ENCODE measurements at regions of chr6 and their contacts with region 1.

Region 1: GRCh38 chr6:27838058-27838944 is 73.9 kb downstream of the OR2B2 start:
- DNase-seq: peak; percentile 65 to 96 (median 93)
- ATAC-seq: peak; percentile 86
- H3K4me3 ChIP-seq: peak overlapping the region; percentile 87
- H3K4me3 Mint-ChIP-seq: no peak overlapping the region
- H3K27ac ChIP-seq: peak overlapping the region; percentile 93
- H3K27ac Mint-ChIP-seq: no peak overlapping the region
- H3K4me1 ChIP-seq: peaks cover 22 to 34% of the 10 kb centered on the region in 2 donors
- H3K4me1 Mint-ChIP-seq: peaks cover 7 to 39% (median 29%) of the 10 kb centered on the region in 7 donors
- H3K27me3 ChIP-seq: no peaks in the 10 kb centered on the region
- H3K27me3 Mint-ChIP-seq: peaks cover 0 to 14% (median 7%) of the 10 kb centered on the region in 5 donors

Region 2: GRCh38 chr6:26054857-26055669 is 1783.2 kb before region 1 on chr6:
- CTCF ChIA-PET with region 1: no interaction called
- POLR2A ChIA-PET with region 1: interaction called, 28 read pairs
- intact Hi-C with region 1: no loop called
- DNase-seq: peak; percentile 54 to 94 (median 90)
- ATAC-seq: peak; percentile 81
- H3K4me3 ChIP-seq: peak overlapping the region; percentile 93
- H3K4me3 Mint-ChIP-seq: peak overlapping the region; percentile 88 to 99 (median 95)
- H3K27ac ChIP-seq: peak overlapping the region; percentile 83
- H3K27ac Mint-ChIP-seq: peak overlapping the region; percentile 95 to 99 (median 98)
- H3K4me1 ChIP-seq: peaks cover 0 to 14% of the 10 kb centered on the region in 2 donors
- H3K4me1 Mint-ChIP-seq: peaks cover 9 to 52% (median 10%) of the 10 kb centered on the region in 7 donors
- H3K27me3 ChIP-seq: no peaks in the 10 kb centered on the region
- H3K27me3 Mint-ChIP-seq: peaks cover 0 to 10% (median 0%) of the 10 kb centered on the region in 5 donors

Region 3: DNA sequence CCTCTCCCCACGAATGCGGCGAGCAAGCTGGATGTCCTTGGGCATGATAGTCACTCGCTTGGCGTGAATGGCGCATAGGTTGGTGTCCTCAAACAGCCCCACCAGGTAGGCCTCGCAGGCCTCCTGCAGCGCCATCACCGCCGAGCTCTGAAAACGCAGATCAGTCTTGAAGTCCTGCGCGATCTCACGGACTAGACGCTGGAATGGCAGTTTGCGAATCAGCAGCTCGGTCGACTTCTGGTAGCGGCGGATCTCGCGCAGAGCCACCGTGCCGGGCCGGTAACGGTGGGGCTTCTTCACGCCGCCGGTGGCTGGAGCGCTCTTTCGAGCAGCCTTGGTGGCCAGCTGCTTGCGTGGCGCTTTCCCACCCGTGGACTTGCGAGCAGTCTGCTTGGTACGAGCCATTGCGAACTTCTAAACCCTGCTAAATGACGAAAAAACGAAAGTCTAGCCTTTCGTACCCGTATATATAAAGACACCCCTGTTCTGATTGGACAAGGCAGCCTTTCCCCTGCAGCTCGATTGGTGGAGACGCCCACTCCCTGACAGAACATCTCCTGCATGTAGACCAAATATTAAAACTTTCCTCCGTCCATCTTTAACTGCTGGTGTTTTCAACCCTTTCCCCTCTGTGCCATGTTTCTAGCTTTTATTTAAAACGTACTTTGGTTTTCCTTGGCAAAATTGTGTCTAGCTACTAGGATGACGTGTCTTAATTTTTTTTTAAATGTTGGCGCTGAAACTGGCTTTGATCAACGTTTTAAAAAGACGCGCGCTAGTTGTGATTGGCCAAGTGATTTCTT is 1641.3 kb before region 1 on chr6:
- CTCF ChIA-PET with region 1: no interaction called
- POLR2A ChIA-PET with region 1: interaction called, 116 read pairs
- intact Hi-C with region 1: loop called in 1 of 2 experiments (anchors 10 kb)
- DNase-seq: peak; percentile 55 to 95 (median 93)
- ATAC-seq: peak; percentile 73
- H3K4me3 ChIP-seq: peak overlapping the region; percentile 92
- H3K4me3 Mint-ChIP-seq: peak overlapping the region; percentile 85 to 99 (median 96)
- H3K27ac ChIP-seq: peak overlapping the region; percentile 91
- H3K27ac Mint-ChIP-seq: peak overlapping the region; percentile 96 to 100 (median 98)
- H3K4me1 ChIP-seq: peaks cover 10 to 12% of the 10 kb centered on the region in 2 donors
- H3K4me1 Mint-ChIP-seq: peaks cover 23 to 65% (median 42%) of the 10 kb centered on the region in 7 donors
- H3K27me3 ChIP-seq: no peaks in the 10 kb centered on the region
- H3K27me3 Mint-ChIP-seq: peaks cover 0 to 12% (median 0%) of the 10 kb centered on the region in 5 donors

Region 4: GRCh38 chr6:26249957-26250697 is 1588.2 kb before region 1 on chr6:
- CTCF ChIA-PET with region 1: no interaction called
- POLR2A ChIA-PET with region 1: interaction called, 15 read pairs
- intact Hi-C with region 1: no loop called
- DNase-seq: peak; percentile 53 to 85 (median 80)
- ATAC-seq: peak; percentile 85
- H3K4me3 ChIP-seq: peak overlapping the region; percentile 84
- H3K4me3 Mint-ChIP-seq: peak overlapping the region; percentile 88 to 100 (median 96)
- H3K27ac ChIP-seq: peak overlapping the region; percentile 71
- H3K27ac Mint-ChIP-seq: peak overlapping the region; percentile 85 to 97 (median 94)
- H3K4me1 ChIP-seq: peaks cover 4 to 19% of the 10 kb centered on the region in 2 donors
- H3K4me1 Mint-ChIP-seq: peaks cover 20 to 48% (median 39%) of the 10 kb centered on the region in 7 donors
- H3K27me3 ChIP-seq: no peaks in the 10 kb centered on the region
- H3K27me3 Mint-ChIP-seq: no peaks in the 10 kb centered on the region

Region 5: DNA sequence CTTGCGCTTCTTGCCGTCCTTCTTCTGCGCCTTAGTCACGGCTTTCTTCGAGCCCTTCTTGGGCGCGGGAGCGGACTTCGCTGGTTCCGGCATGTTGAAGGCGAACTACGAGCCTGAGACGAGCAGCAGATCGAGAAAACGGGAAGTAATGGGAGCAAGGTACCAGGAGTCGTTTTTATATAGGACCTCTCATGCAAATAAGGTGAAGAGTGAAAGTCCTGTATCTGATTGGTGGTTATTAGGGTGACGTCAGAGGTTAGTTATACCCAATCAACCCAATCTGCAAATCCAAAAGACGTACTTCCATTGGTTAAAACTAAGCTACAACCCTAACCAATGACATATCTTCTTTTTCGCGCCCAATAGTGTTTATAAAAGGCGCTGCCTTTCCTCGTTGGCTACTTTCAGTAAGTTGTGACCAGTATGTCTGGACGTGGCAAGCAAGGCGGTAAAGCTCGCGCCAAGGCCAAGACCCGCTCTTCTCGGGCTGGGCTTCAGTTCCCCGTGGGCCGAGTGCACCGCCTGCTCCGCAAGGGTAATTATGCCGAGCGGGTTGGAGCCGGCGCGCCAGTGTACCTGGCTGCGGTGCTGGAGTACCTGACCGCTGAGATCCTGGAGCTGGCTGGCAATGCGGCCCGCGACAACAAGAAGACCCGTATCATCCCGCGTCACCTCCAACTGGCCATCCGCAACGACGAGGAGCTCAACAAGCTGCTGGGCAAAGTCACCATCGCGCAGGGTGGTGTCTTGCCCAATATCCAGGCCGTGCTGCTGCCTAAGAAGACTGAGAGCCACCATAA is 691.4 kb before region 1 on chr6:
- CTCF ChIA-PET with region 1: interaction called, 3 read pairs
- POLR2A ChIA-PET with region 1: interaction called, 89 read pairs
- intact Hi-C with region 1: loop called in 1 of 2 experiments (anchors 1 kb)
- DNase-seq: peak; percentile 71 to 96 (median 92)
- ATAC-seq: peak; percentile 92
- H3K4me3 ChIP-seq: peak overlapping the region; percentile 90
- H3K4me3 Mint-ChIP-seq: no peak overlapping the region
- H3K27ac ChIP-seq: peak overlapping the region; percentile 89
- H3K27ac Mint-ChIP-seq: no peak overlapping the region
- H3K4me1 ChIP-seq: peaks cover 6 to 7% of the 10 kb centered on the region in 2 donors
- H3K4me1 Mint-ChIP-seq: peaks cover 0 to 26% (median 14%) of the 10 kb centered on the region in 7 donors
- H3K27me3 ChIP-seq: no peaks in the 10 kb centered on the region
- H3K27me3 Mint-ChIP-seq: no peaks in the 10 kb centered on the region

Region 6: DNA sequence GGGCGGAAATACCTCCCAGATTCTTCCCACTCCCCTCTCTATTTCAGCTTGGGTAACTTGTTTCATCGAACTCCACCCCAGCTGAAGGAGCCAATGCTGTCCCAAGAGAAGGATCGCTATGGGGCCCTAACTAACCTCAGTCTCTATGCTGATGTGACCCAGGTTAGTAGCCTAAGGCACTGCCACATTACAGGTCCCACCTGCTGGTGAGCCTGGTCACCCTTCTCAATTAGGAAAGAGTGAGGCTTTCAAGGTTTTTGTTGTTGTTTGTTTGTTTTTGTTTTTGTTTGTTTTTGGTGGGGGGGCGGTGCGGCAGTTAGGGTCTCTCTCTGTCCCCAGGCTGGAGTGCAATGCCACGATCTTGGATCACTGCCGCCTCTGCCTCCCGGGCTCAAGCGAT is 94.5 kb before region 1 on chr6:
- CTCF ChIA-PET with region 1: no interaction called
- POLR2A ChIA-PET with region 1: no interaction called
- intact Hi-C with region 1: no loop called
- DNase-seq: no peak
- ATAC-seq: no peak
- H3K4me3 ChIP-seq: no peak overlapping the region
- H3K4me3 Mint-ChIP-seq: peak overlapping the region in 2 of 10 donors; percentile 12 to 40
- H3K27ac ChIP-seq: no peak overlapping the region
- H3K27ac Mint-ChIP-seq: no peak overlapping the region
- H3K4me1 ChIP-seq: no peaks in the 10 kb centered on the region
- H3K4me1 Mint-ChIP-seq: peaks cover 0 to 16% (median 3%) of the 10 kb centered on the region in 7 donors
- H3K27me3 ChIP-seq: peaks cover 0 to 7% of the 10 kb centered on the region in 2 donors
- H3K27me3 Mint-ChIP-seq: peaks cover 30 to 48% (median 34%) of the 10 kb centered on the region in 5 donors

Region 7: GRCh38 chr6:27864906-27865849 is 26.9 kb after region 1 on chr6:
- CTCF ChIA-PET with region 1: interaction called, 33 read pairs
- POLR2A ChIA-PET with region 1: interaction called, 1,351 read pairs
- intact Hi-C with region 1: loop called (anchors 1 kb)
- DNase-seq: peak; percentile 56 to 93 (median 89)
- ATAC-seq: peak; percentile 85
- H3K4me3 ChIP-seq: peak overlapping the region; percentile 74
- H3K4me3 Mint-ChIP-seq: peak overlapping the region; percentile 85 to 99 (median 97)
- H3K27ac ChIP-seq: peak overlapping the region; percentile 71
- H3K27ac Mint-ChIP-seq: peak overlapping the region; percentile 88 to 98 (median 95)
- H3K4me1 ChIP-seq: peaks cover 8 to 25% of the 10 kb centered on the region in 2 donors
- H3K4me1 Mint-ChIP-seq: peaks cover 22 to 64% (median 46%) of the 10 kb centered on the region in 7 donors
- H3K27me3 ChIP-seq: no peaks in the 10 kb centered on the region
- H3K27me3 Mint-ChIP-seq: peaks cover 0 to 16% (median 0%) of the 10 kb centered on the region in 5 donors

Region 8: GRCh38 chr6:28895134-28895812 is 1057.0 kb after region 1 on chr6:
- CTCF ChIA-PET with region 1: no interaction called
- POLR2A ChIA-PET with region 1: interaction called, 3 read pairs
- intact Hi-C with region 1: loop called in 1 of 2 experiments (anchors 10 kb)
- DNase-seq: peak; percentile 72 to 95 (median 91)
- ATAC-seq: peak; percentile 83
- H3K4me3 ChIP-seq: peak overlapping the region; percentile 82
- H3K4me3 Mint-ChIP-seq: peak overlapping the region; percentile 92 to 100 (median 98)
- H3K27ac ChIP-seq: peak overlapping the region; percentile 99
- H3K27ac Mint-ChIP-seq: peak overlapping the region; percentile 98 to 100 (median 100)
- H3K4me1 ChIP-seq: peaks cover 5 to 6% of the 10 kb centered on the region in 2 donors
- H3K4me1 Mint-ChIP-seq: peaks cover 0 to 32% (median 14%) of the 10 kb centered on the region in 7 donors
- H3K27me3 ChIP-seq: no peaks in the 10 kb centered on the region
- H3K27me3 Mint-ChIP-seq: peaks cover 0 to 15% (median 0%) of the 10 kb centered on the region in 5 donors

Measured in naive thymus-derived CD4-positive, alpha-beta T cell (primary cell).